A549 (cell line): ENCODE measurements at regions of chr20 and their contacts with region 1.

Region 1: GRCh38 chr20:17504898-17505635 is 26.1 kb downstream of the BFSP1 start:
- DNase-seq: peak; percentile 45 to 53
- ATAC-seq: peak; percentile 45 to 77
- H3K4me3 ChIP-seq: 0 out of 3 replicates have a peak overlapping the region, but pooled peaks have one; percentile 15
- H3K27ac ChIP-seq: peak overlapping the region; percentile 30 to 64; a peak in 4 of 6 replicates
- H3K4me1 ChIP-seq: 0 out of 3 replicates have a peak, but pooled peaks cover 3% of the 10 kb centered on the region
- CTCF ChIP-seq: peak; percentile 98
- EP300 ChIP-seq: no peak
- POLR2A ChIP-seq: no peak
- RAD21 ChIP-seq: peak; percentile 91 to 95

Region 2: GRCh38 chr20:17233626-17234025 is 271.4 kb before region 1 on chr20:
- CTCF ChIA-PET with region 1: no interaction called
- POLR2A ChIA-PET with region 1: no interaction called
- DNase-seq: no peak
- ATAC-seq: no peak
- H3K4me3 ChIP-seq: no peak overlapping the region
- H3K27ac ChIP-seq: no peak overlapping the region
- H3K4me1 ChIP-seq: no peaks in the 10 kb centered on the region
- CTCF ChIP-seq: no peak
- EP300 ChIP-seq: no peak
- POLR2A ChIP-seq: no peak
- RAD21 ChIP-seq: no peak

Region 3: GRCh38 chr20:17320456-17320855 is 184.6 kb before region 1 on chr20:
- CTCF ChIA-PET with region 1: no interaction called
- POLR2A ChIA-PET with region 1: no interaction called
- DNase-seq: no peak
- ATAC-seq: no peak
- H3K4me3 ChIP-seq: no peak overlapping the region
- H3K27ac ChIP-seq: no peak overlapping the region
- H3K4me1 ChIP-seq: no peaks in the 10 kb centered on the region
- CTCF ChIP-seq: no peak
- EP300 ChIP-seq: no peak
- POLR2A ChIP-seq: no peak
- RAD21 ChIP-seq: no peak

Region 4: GRCh38 chr20:17530716-17531664 is 25.9 kb after region 1 on chr20 and contains the start of gene BFSP1:
- CTCF ChIA-PET with region 1: interaction called, 32 read pairs
- POLR2A ChIA-PET with region 1: interaction called, 4 read pairs
- DNase-seq: peak; percentile 58 to 79
- ATAC-seq: peak; percentile 81 to 86
- H3K4me3 ChIP-seq: peak within 1 kb of the TSS; percentile 55
- H3K27ac ChIP-seq: peak within 1 kb of the TSS; percentile 86 to 95
- H3K4me1 ChIP-seq: peaks cover 21% of the 10 kb centered on the region
- CTCF ChIP-seq: peak; percentile 12; the same call in 1 of the 3 replicates
- EP300 ChIP-seq: no peak
- POLR2A ChIP-seq: peak; percentile 43
- RAD21 ChIP-seq: no peak
- polyA plus RNA-seq, gene BFSP1: 6.1 and 7.2 TPM in 2 replicates

Region 5: DNA sequence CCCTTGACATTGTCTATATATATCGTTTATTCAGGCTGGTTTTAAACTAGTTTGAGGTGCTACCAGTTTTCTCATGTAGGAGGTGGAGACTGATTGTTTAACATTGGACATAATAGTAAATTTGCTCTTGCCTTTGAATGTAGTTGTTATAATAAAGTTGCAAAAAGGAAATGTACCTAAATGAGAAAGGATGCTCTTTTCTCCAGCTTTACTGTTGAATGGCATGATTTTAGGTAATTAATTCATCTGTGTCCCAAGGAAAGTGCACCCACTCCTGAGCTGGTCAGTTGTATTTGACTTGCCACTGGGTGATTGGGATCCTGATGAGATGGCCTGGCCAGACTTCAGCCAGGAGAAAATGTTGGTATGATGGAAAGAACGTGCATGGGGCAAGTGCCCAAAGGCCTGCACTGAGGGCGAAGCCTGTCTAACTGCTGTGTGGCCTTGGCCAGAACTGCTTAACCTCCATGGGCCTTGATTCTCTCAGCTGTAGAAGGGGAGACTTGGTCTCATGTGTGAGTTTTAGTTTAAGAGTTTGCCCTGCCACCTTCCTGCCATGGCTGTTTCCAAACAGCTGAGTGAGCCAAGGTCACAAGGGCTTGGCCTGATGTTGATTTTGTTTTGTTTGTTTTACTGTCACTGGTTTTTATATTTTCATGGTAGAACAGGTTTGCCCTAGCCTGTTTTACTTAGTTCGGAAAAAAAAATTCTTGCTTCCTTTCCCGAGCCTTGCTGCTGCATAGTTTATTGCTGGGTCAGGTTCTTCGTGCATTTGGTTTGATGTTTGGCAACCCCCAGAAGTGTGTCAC is 100.0 kb after region 1 on chr20:
- CTCF ChIA-PET with region 1: interaction called, 26 read pairs
- POLR2A ChIA-PET with region 1: no interaction called
- DNase-seq: no peak
- ATAC-seq: peak; percentile 20 to 34; a peak in 4 of 6 replicates
- H3K4me3 ChIP-seq: no peak overlapping the region
- H3K27ac ChIP-seq: peak overlapping the region; percentile 4 to 55; a peak in 4 of 6 replicates
- H3K4me1 ChIP-seq: peaks cover 64% of the 10 kb centered on the region
- CTCF ChIP-seq: no peak
- EP300 ChIP-seq: no peak
- POLR2A ChIP-seq: no peak
- RAD21 ChIP-seq: no peak

Region 6: GRCh38 chr20:17624551-17625240 is 119.6 kb after region 1 on chr20:
- CTCF ChIA-PET with region 1: interaction called, 230 read pairs
- POLR2A ChIA-PET with region 1: no interaction called
- DNase-seq: no peak
- ATAC-seq: no peak
- H3K4me3 ChIP-seq: no peak overlapping the region
- H3K27ac ChIP-seq: no peak overlapping the region
- H3K4me1 ChIP-seq: no peaks in the 10 kb centered on the region
- CTCF ChIP-seq: no peak
- EP300 ChIP-seq: no peak
- POLR2A ChIP-seq: no peak
- RAD21 ChIP-seq: no peak

Region 7: GRCh38 chr20:17654649-17655285 is 149.7 kb after region 1 on chr20:
- CTCF ChIA-PET with region 1: interaction called, 36 read pairs
- POLR2A ChIA-PET with region 1: no interaction called
- DNase-seq: peak in 1 of 2 experiments; percentile 37
- ATAC-seq: peak in 1 of 2 experiments; percentile 56; a peak in 3 of 6 replicates
- H3K4me3 ChIP-seq: no peak overlapping the region
- H3K27ac ChIP-seq: no peak overlapping the region
- H3K4me1 ChIP-seq: peaks cover 26% of the 10 kb centered on the region
- CTCF ChIP-seq: peak; percentile 79
- EP300 ChIP-seq: no peak
- POLR2A ChIP-seq: no peak
- RAD21 ChIP-seq: peak; percentile 27 to 33; a peak in 1 of 5 replicates

Region 8: DNA sequence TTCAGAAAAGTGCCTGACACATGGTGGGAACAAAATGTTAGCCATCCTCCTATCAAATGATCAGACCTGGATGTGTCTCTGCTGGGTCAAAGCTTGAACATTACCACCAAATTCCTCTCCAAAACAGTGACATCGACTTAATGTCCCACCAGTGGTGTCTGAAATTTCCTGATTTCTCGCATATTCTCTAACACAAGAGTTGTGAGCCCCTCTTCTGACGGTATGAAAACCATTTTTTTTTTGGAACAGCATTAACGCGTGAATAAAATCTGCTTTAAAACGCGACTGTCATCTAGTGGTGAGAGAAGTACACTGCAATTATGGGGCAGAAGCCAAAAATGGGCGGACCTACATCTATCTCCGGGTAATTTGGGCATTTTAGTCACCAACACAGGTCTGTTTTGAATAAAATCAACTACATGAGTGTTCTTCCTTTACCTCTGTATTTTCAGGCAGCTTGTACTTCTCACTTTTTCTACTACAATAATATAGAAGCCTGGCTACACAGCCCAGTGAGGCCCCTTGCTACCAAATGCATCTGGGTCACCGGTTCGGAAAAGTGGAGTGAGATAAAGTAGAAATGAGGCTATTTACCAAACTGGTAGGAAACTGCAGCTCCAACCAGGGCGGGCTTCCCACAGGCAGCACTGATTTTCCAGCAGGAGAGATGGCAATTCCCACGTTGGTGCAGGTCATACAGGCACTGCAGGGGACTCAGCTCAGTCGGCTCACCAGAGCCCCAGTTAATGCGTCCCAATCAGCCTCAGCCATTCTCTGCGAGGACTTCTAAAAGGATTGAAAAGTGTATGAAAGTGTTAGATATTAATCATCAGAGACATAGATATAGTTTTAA is 491.1 kb after region 1 on chr20:
- CTCF ChIA-PET with region 1: interaction called, 27 read pairs
- POLR2A ChIA-PET with region 1: no interaction called
- DNase-seq: peak; percentile 58 to 66
- ATAC-seq: peak; percentile 64 to 81
- H3K4me3 ChIP-seq: no peak overlapping the region
- H3K27ac ChIP-seq: no peak overlapping the region
- H3K4me1 ChIP-seq: peaks cover 4% of the 10 kb centered on the region; the same call in 2 of the 3 replicates
- CTCF ChIP-seq: peak; percentile 98
- EP300 ChIP-seq: no peak
- POLR2A ChIP-seq: no peak
- RAD21 ChIP-seq: peak; percentile 90 to 92